Transverse colon (tissue), 4 donors: ENCODE measurements at regions of chr19 and their contacts with region 1.

Region 1: GRCh38 chr19:38544034-38544958 is 73.5 kb downstream of the MAP4K1 start:
- DNase-seq: peak; percentile 42
- H3K4me3 ChIP-seq: peak overlapping the region in 1 of 4 donors; percentile 3
- H3K27ac ChIP-seq: peak overlapping the region in 1 of 4 donors; percentile 42
- H3K4me1 ChIP-seq: peaks cover 0 to 9% (median 1%) of the 10 kb centered on the region in 4 donors
- H3K27me3 ChIP-seq: no peaks in the 10 kb centered on the region
- CTCF ChIP-seq: peak; percentile 48 to 58 (median 52)
- EP300 ChIP-seq: no peak
- POLR2A ChIP-seq: no peak

Region 2: DNA sequence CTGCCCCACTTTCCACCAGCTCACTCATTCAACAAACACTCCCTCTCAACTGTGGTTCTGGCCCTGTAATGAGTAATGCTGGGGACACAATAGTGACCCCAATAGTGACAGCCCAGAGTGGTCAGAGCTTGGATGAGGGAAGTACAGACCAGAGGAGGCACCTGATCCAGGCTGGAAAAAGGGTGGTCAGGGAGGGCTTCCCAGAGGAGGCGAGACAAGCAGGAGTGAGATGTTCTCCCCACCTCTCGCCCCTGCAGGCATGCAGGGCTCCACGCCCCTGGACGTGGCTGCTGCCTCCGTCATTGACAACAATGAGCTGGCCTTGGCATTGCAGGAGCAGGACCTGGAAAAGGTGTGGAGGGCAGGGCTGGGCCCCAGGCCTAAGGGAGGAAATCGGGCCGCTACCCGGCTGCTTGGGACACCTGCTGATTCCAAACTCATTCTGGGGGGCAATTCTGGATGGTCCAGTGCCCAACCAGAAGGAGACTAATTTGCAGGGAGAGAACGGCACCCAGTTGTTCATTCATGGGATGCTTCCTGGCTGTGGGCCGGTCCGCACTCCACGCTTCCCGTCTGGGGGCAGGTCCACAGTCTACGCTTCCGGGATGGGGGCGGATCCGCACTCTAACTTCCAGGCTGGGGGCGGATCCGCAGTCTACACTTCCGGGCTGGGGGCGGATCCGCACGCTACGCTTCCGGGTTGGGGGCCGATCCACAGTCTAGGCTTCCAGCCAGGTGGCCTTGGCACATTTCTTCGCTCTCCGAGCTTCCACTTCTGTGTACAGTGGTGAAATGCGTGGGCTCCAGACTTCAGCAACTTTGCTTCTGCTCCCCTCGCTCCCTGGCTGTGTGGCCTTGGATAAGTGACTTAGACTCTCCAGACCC is 47.5 kb before region 1 on chr19:
- in situ Hi-C with region 1: no loop called
- intact Hi-C with region 1: no loop called
- DNase-seq: no peak
- H3K4me3 ChIP-seq: no peak overlapping the region
- H3K27ac ChIP-seq: no peak overlapping the region
- H3K4me1 ChIP-seq: no peaks in the 10 kb centered on the region
- H3K27me3 ChIP-seq: no peaks in the 10 kb centered on the region
- CTCF ChIP-seq: no peak
- EP300 ChIP-seq: no peak
- POLR2A ChIP-seq: no peak

Region 3: GRCh38 chr19:38618590-38619360 is 74.5 kb after region 1 on chr19 and contains the start of gene EIF3K:
- in situ Hi-C with region 1: loop called in 2 of 4 experiments (anchors 10 kb)
- intact Hi-C with region 1: no loop called
- DNase-seq: peak; percentile 99
- H3K4me3 ChIP-seq: peak within 1 kb of the TSS; percentile 76 to 95 (median 84)
- H3K27ac ChIP-seq: peak within 1 kb of the TSS; percentile 89 to 95 (median 92)
- H3K4me1 ChIP-seq: peaks cover 11 to 20% (median 16%) of the 10 kb centered on the region in 4 donors
- H3K27me3 ChIP-seq: no peaks in the 10 kb centered on the region
- CTCF ChIP-seq: no peak
- EP300 ChIP-seq: no peak
- POLR2A ChIP-seq: peak; percentile 86
- total RNA-seq, gene EIF3K: 267 to 660 (median 460) TPM

Region 4: DNA sequence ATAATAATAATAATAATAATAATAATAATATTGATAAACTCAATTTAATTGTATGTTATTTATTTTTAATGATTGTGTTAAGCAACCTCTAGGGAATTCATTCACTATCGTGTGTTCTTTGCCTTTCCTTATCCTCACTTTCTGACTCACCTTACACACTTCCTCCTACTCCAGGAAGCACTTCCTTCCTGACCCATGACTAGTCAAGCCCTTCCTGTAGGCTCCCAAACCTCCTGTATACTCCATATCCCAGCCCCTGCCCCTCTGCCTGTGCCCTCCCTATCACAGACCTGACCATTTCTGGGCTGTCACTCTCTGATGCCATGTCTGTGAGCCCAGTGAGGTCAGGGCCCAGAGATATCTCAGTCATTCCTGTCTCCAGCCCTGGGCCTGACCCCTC is 260.9 kb after region 1 on chr19:
- in situ Hi-C with region 1: no loop called
- intact Hi-C with region 1: no loop called
- DNase-seq: no peak
- H3K4me3 ChIP-seq: no peak overlapping the region
- H3K27ac ChIP-seq: peak overlapping the region; percentile 34 to 66 (median 56)
- H3K4me1 ChIP-seq: peaks cover 0 to 6% (median 3%) of the 10 kb centered on the region in 4 donors
- H3K27me3 ChIP-seq: no peaks in the 10 kb centered on the region
- CTCF ChIP-seq: no peak
- EP300 ChIP-seq: no peak
- POLR2A ChIP-seq: no peak

Region 5: GRCh38 chr19:38929929-38930775 is 385.9 kb after region 1 on chr19 and contains the start of gene SARS2:
- in situ Hi-C with region 1: loop called in 1 of 4 experiments (anchors 25 kb)
- intact Hi-C with region 1: no loop called
- DNase-seq: peak; percentile 93
- H3K4me3 ChIP-seq: peak within 1 kb of the TSS; percentile 55 to 83 (median 70)
- H3K27ac ChIP-seq: peak within 1 kb of the TSS; percentile 88 to 93 (median 90)
- H3K4me1 ChIP-seq: peaks cover 7 to 19% (median 13%) of the 10 kb centered on the region in 4 donors
- H3K27me3 ChIP-seq: no peaks in the 10 kb centered on the region
- CTCF ChIP-seq: peak; percentile 97 to 99 (median 99)
- EP300 ChIP-seq: no peak
- POLR2A ChIP-seq: no peak
- total RNA-seq, gene SARS2: 21.4 to 186 (median 42.7) TPM